Naive thymus-derived CD4-positive, alpha-beta T cell (primary cell): ENCODE measurements at regions of chr11 and their contacts with region 1.

Region 1: GRCh38 chr11:10750838-10751580 is at the start of gene CTR9:
- DNase-seq: peak; percentile 78 to 94 (median 88)
- ATAC-seq: peak; percentile 96
- H3K4me3 ChIP-seq: peak within 1 kb of the TSS; percentile 79
- H3K4me3 Mint-ChIP-seq: peak within 1 kb of the TSS; percentile 95 to 99 (median 97)
- H3K27ac ChIP-seq: peak within 1 kb of the TSS; percentile 85
- H3K27ac Mint-ChIP-seq: peak within 1 kb of the TSS; percentile 90 to 96 (median 91)
- H3K4me1 ChIP-seq: peaks cover 7 to 8% of the 10 kb centered on the region in 2 donors
- H3K4me1 Mint-ChIP-seq: peaks cover 12 to 36% (median 31%) of the 10 kb centered on the region in 7 donors
- H3K27me3 ChIP-seq: no peaks in the 10 kb centered on the region
- H3K27me3 Mint-ChIP-seq: no peaks in the 10 kb centered on the region
- total RNA-seq, gene CTR9: 23.8 to 64.0 (median 47.8) TPM

Region 2: GRCh38 chr11:10450464-10451425 is 300.3 kb before region 1 on chr11:
- CTCF ChIA-PET with region 1: no interaction called
- POLR2A ChIA-PET with region 1: interaction called, 3 read pairs
- intact Hi-C with region 1: loop called in 1 of 2 experiments (anchors 2 kb)
- DNase-seq: peak; percentile 34 to 66 (median 59)
- ATAC-seq: peak; percentile 66
- H3K4me3 ChIP-seq: peak overlapping the region; percentile 63
- H3K4me3 Mint-ChIP-seq: peak overlapping the region; percentile 88 to 96 (median 92)
- H3K27ac ChIP-seq: peak overlapping the region; percentile 84
- H3K27ac Mint-ChIP-seq: peak overlapping the region; percentile 87 to 97 (median 95)
- H3K4me1 ChIP-seq: peaks cover 24 to 44% of the 10 kb centered on the region in 2 donors
- H3K4me1 Mint-ChIP-seq: peaks cover 43 to 75% (median 68%) of the 10 kb centered on the region in 7 donors
- H3K27me3 ChIP-seq: no peaks in the 10 kb centered on the region
- H3K27me3 Mint-ChIP-seq: peaks cover 0 to 23% (median 0%) of the 10 kb centered on the region in 5 donors

Region 3: GRCh38 chr11:10725114-10725906 is 25.7 kb before region 1 on chr11:
- CTCF ChIA-PET with region 1: no interaction called
- POLR2A ChIA-PET with region 1: no interaction called
- intact Hi-C with region 1: no loop called
- DNase-seq: peak in 5 of 9 donors; percentile 12 to 45 (median 24)
- ATAC-seq: peak; percentile 88
- H3K4me3 ChIP-seq: no peak overlapping the region
- H3K4me3 Mint-ChIP-seq: peak overlapping the region in 4 of 10 donors; percentile 5 to 30 (median 22)
- H3K27ac ChIP-seq: no peak overlapping the region
- H3K27ac Mint-ChIP-seq: no peak overlapping the region
- H3K4me1 ChIP-seq: peaks cover 0 to 13% of the 10 kb centered on the region in 2 donors
- H3K4me1 Mint-ChIP-seq: peaks cover 15 to 27% (median 21%) of the 10 kb centered on the region in 7 donors
- H3K27me3 ChIP-seq: no peaks in the 10 kb centered on the region
- H3K27me3 Mint-ChIP-seq: peaks cover 0 to 26% (median 10%) of the 10 kb centered on the region in 5 donors

Region 4: DNA sequence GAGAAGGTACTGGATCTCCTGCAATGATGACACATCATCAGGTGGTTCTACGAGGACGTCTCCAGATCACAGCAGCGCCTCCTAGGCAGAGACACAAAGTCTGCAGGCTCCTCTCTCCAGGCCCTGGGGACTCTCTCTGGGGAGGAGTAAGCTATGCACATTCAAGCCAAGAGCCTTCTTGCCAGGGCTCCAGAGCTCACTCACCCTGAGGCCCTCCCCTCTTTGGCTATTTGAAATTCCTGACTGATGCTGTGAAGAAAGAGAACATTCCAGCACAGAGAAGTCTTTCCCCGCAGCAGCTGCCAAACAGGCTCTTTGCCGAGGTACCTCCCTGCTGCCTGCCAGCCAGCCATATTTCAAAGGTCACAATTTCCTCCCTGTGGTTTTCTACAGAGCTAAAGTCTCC is 397.1 kb after region 1 on chr11:
- CTCF ChIA-PET with region 1: no interaction called
- POLR2A ChIA-PET with region 1: no interaction called
- intact Hi-C with region 1: loop called in 1 of 2 experiments (anchors 5 kb)
- DNase-seq: peak in 7 of 9 donors; percentile 29 to 43 (median 35)
- ATAC-seq: no peak
- H3K4me3 ChIP-seq: no peak overlapping the region
- H3K4me3 Mint-ChIP-seq: peak overlapping the region in 9 of 10 donors; percentile 20 to 84 (median 70)
- H3K27ac ChIP-seq: peak overlapping the region; percentile 87
- H3K27ac Mint-ChIP-seq: peak overlapping the region in 8 of 9 donors; percentile 93 to 99 (median 98)
- H3K4me1 ChIP-seq: peaks cover 31 to 61% of the 10 kb centered on the region in 2 donors
- H3K4me1 Mint-ChIP-seq: peaks cover 32 to 74% (median 70%) of the 10 kb centered on the region in 7 donors
- H3K27me3 ChIP-seq: no peaks in the 10 kb centered on the region
- H3K27me3 Mint-ChIP-seq: peaks cover 0 to 2% (median 0%) of the 10 kb centered on the region in 5 donors